ENCODE measurements at regions of chr3 and their contacts with region 1.

Region 1: DNA sequence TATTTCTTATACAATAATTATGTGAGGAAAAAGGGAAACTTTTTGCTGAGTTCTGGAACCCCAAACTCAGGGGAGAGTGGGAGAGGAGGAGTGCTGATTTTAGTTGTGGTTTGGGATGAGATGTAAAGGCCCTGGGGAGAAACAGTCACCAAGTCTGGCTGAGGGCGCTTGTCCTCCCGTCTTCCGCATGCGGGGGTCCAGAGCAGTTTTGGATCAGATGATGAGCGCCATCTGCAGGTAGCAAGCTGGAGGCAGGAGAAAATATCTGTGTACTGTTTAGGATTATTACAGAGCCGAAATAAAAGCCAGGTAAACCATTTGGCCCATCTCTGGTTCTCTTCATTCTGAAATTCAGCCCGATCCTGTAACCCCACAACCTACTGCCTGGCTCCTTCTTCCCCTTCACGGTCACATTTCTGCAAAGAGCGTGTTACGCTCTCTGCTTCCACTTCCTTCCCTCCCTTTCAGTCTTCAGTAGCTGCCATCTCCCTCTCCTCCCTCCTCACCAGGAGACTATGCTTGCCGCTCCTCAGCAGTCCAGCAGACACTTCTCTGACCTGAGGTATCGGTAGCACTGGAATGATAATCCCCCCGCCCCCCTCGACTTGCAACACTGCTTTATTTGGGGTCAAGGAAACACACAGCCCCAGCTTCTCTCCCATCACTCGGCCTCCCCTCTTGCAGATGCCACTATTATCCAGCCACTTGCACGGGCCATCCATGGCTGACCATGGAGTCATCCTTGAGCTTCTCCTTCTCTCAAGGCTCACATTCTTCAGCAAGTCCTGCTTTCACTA is 1.4 kb upstream of the PARP14 start:
- DNase-seq: peak; percentile 82
- ATAC-seq: peak; percentile 82

Region 2: GRCh38 chr3:122392868-122393844 is 286.1 kb before region 1 on chr3:
- intact Hi-C with region 1: loop called (anchors 5 kb)
- DNase-seq: no peak
- ATAC-seq: peak; percentile 30

Region 3: DNA sequence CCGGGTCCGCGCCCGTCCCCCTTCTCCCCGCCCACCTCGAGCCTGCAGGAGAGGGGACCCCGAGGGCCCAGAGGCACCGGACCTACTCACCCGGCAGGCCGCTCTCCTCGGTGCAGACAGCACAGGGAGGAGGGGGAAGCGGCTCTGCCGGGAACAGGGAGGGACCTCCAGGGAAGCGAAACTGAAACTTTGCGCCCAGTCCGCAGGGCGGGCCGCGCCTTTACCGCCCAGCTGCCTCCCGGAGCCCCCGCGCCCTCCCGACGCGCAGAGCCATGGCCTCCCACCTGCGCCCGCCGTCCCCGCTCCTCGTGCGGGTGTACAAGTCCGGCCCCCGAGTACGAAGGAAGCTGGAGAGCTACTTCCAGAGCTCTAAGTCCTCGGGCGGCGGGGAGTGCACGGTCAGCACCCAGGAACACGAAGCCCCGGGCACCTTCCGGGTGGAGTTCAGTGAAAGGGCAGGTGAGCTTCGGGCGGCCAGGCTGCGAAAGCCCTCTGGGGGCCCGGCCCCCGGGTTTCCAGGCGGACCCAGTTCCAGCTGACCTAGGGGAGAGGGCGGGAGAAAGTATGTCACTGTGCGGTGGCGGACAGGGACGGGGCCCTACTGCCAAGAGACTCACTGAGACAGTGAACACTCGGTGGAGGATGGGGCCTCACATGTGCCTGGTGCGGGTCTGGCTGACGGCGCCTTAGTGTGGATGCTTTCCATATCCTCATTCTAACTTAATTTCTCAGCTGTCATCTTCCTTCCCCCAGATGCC is 114.9 kb before region 1 on chr3 and contains the starts of genes DTX3L and PARP9:
- intact Hi-C with region 1: loop called (anchors 5 kb)
- DNase-seq: peak; percentile 89
- ATAC-seq: peak; percentile 99
- total RNA-seq, gene DTX3L: 10.5 TPM
- total RNA-seq, gene PARP9: 11.8 TPM